Sigmoid colon (tissue), 7 donors: ENCODE measurements at regions of chr9 and their contacts with region 1.

Region 1: GRCh38 chr9:16871356-16872151 is 1.1 kb upstream of the BNC2 start:
- DNase-seq: peak; percentile 86
- H3K4me3 ChIP-seq: peak overlapping the region; percentile 54 to 91 (median 84)
- H3K27ac ChIP-seq: peak overlapping the region; percentile 88 to 98 (median 95)
- H3K4me1 ChIP-seq: peaks cover 0 to 20% (median 5%) of the 10 kb centered on the region in 4 donors
- H3K27me3 ChIP-seq: no peaks in the 10 kb centered on the region
- CTCF ChIP-seq: no peak
- EP300 ChIP-seq: no peak
- POLR2A ChIP-seq: no peak

Region 2: GRCh38 chr9:16154521-16155078 is 717.0 kb before region 1 on chr9:
- intact Hi-C with region 1: loop called (anchors 5 kb)
- DNase-seq: no peak
- H3K4me3 ChIP-seq: peak overlapping the region in 3 of 4 donors; percentile 10 to 21 (median 17)
- H3K27ac ChIP-seq: no peak overlapping the region
- H3K4me1 ChIP-seq: peaks cover 0 to 44% (median 40%) of the 10 kb centered on the region in 4 donors
- H3K27me3 ChIP-seq: no peaks in the 10 kb centered on the region
- CTCF ChIP-seq: peak in 2 of 4 experiments; percentile 31 to 36
- EP300 ChIP-seq: no peak
- POLR2A ChIP-seq: no peak

Region 3: DNA sequence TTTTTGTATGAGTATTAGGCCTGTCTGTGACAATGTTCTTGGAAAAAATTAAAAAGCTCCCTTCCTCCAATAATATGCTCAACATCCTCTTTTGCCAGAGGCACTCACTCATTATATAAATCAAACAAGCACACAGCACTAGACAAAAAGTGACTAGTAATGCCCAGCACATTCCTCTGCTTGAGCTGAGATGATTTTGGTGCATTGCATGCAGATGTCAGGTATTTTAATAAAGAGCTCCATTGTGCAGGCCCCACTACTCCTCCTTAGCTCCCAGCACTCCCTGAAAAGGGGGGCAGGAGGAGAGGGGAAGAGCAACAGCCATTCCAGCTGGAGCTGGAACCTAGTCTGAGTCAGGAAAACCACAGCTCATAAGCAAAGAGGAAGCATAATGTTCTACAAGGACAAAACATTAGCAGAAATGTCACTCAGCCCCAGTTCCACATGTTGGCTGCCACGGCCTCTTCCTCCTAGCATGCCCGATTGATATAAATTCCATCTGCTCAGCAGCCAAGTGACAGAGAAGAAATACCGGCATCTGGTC is 349.6 kb before region 1 on chr9:
- intact Hi-C with region 1: loop called (anchors 5 kb)
- DNase-seq: peak; percentile 73
- H3K4me3 ChIP-seq: no peak overlapping the region
- H3K27ac ChIP-seq: peak overlapping the region; percentile 80 to 85 (median 82)
- H3K4me1 ChIP-seq: peaks cover 0 to 54% (median 34%) of the 10 kb centered on the region in 4 donors
- H3K27me3 ChIP-seq: no peaks in the 10 kb centered on the region
- CTCF ChIP-seq: no peak
- EP300 ChIP-seq: no peak
- POLR2A ChIP-seq: no peak

Region 4: DNA sequence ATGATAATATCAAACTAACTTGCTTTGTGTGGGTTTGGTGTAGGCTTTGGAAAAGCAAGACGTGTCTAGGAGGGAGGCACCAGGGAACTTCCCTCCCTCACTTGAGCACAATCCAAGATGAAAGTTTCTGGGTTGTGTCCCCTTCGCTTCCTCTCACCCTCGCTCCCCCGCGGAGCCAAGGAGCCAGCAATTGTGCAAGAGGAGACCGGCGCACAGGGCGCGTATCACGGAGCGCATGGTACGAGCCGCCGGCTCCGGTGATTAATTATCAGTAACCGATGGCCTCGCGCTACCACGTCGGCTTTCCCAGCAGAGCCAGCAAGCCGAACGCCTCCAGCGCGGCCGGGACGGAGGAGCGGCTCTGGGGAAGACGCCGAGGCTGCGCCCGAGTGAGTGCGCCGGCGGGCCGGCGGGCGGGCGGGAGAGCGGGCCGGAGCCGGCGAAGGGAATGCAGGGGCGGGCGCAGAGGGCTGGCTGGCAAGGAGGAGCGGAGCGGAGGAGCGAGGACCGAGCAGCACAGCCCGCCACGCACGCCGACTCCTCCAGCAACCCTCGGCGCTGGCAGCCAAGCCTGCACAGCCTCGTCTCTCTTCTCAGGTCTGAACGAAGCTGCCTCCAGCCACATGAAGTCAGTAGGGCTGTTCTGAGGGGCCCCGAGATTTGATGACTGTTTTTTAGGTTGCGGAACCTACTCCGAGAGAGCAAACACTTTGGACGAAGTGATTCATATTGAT is 144.7 kb before region 1 on chr9:
- intact Hi-C with region 1: loop called (anchors 2 kb)
- DNase-seq: peak; percentile 95
- H3K4me3 ChIP-seq: peak overlapping the region; percentile 44 to 63 (median 59)
- H3K27ac ChIP-seq: peak overlapping the region; percentile 87 to 91 (median 89)
- H3K4me1 ChIP-seq: peaks cover 0 to 83% (median 42%) of the 10 kb centered on the region in 4 donors
- H3K27me3 ChIP-seq: no peaks in the 10 kb centered on the region
- CTCF ChIP-seq: no peak
- EP300 ChIP-seq: peak in 1 of 4 donors; percentile 44
- POLR2A ChIP-seq: peak in 1 of 2 donors; percentile 5

Region 5: GRCh38 chr9:16985559-16986348 is 114.2 kb after region 1 on chr9:
- intact Hi-C with region 1: loop called (anchors 5 kb)
- DNase-seq: peak; percentile 88
- H3K4me3 ChIP-seq: no peak overlapping the region
- H3K27ac ChIP-seq: peak overlapping the region; percentile 58 to 81 (median 75)
- H3K4me1 ChIP-seq: peaks cover 0 to 23% (median 20%) of the 10 kb centered on the region in 4 donors
- H3K27me3 ChIP-seq: no peaks in the 10 kb centered on the region
- CTCF ChIP-seq: no peak
- EP300 ChIP-seq: peak in 2 of 4 donors; percentile 35 to 69
- POLR2A ChIP-seq: no peak